ENCODE measurements at regions of chr12 and their contacts with region 1.

Region 1: DNA sequence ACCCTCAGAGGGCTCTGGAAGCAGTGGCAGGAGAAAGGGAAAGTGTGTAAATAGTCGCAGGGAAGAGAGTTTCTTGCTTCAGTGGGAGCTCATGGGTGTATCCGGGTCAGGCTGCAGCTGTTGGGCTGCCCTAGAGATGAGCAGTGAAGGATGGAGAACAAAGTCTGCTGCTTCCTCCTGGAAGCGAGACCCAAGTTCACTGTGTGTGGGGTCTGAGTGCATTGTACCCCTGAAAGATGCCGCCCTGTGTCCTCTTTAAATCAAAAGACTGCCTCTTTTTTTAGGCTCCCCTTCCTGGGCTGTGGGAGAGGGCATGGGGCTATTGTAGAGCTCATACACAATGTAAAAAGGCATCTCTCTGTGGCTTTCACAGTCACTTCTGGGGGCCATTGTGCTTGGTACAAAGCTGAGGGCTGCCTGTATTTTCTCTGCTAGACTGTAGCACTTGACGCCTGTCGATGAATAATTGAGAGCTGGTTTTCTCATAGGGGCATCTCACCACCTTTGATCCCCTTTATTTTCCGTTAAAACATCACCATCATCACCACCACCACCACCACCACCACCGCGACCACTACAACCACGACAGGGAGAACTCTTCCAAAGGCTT is 16.7 kb downstream of the CHST11 start:
- DNase-seq: no peak
- ATAC-seq: peak; percentile 84
- H3K4me3 Mint-ChIP-seq: peak overlapping the region; percentile 81
- H3K27ac Mint-ChIP-seq: peak overlapping the region; percentile 94
- H3K4me1 Mint-ChIP-seq: peaks cover 87% of the 10 kb centered on the region
- H3K27me3 Mint-ChIP-seq: no peaks in the 10 kb centered on the region
- CTCF ChIP-seq: no peak

Region 2: GRCh38 chr12:104462931-104463339 is 10.5 kb before region 1 on chr12:
- CTCF ChIA-PET with region 1: interaction called, 8 read pairs
- POLR2A ChIA-PET with region 1: interaction called, 64 read pairs
- intact Hi-C with region 1: loop called (anchors 1 kb)
- DNase-seq: no peak
- ATAC-seq: peak; percentile 61
- H3K4me3 Mint-ChIP-seq: peak overlapping the region; percentile 67
- H3K27ac Mint-ChIP-seq: peak overlapping the region; percentile 91
- H3K4me1 Mint-ChIP-seq: peaks cover 88% of the 10 kb centered on the region
- H3K27me3 Mint-ChIP-seq: no peaks in the 10 kb centered on the region
- CTCF ChIP-seq: no peak